Activated naive CD4-positive, alpha-beta T cell treated with anti-CD3 and anti-CD28 coated beads for 36 hours (primary cell): ENCODE measurements at regions of chr19 and their contacts with region 1.

Region 1: GRCh38 chr19:7680606-7681339 is at the start of gene TRAPPC5:
- DNase-seq: peak; percentile 86
- H3K4me3 Mint-ChIP-seq: peak within 1 kb of the TSS; percentile 92
- H3K27ac Mint-ChIP-seq: peak within 1 kb of the TSS; percentile 88
- H3K4me1 Mint-ChIP-seq: peaks cover 48% of the 10 kb centered on the region
- H3K27me3 Mint-ChIP-seq: peaks cover 15% of the 10 kb centered on the region
- total RNA-seq, gene TRAPPC5: 74.7 to 82.4 TPM

Region 2: DNA sequence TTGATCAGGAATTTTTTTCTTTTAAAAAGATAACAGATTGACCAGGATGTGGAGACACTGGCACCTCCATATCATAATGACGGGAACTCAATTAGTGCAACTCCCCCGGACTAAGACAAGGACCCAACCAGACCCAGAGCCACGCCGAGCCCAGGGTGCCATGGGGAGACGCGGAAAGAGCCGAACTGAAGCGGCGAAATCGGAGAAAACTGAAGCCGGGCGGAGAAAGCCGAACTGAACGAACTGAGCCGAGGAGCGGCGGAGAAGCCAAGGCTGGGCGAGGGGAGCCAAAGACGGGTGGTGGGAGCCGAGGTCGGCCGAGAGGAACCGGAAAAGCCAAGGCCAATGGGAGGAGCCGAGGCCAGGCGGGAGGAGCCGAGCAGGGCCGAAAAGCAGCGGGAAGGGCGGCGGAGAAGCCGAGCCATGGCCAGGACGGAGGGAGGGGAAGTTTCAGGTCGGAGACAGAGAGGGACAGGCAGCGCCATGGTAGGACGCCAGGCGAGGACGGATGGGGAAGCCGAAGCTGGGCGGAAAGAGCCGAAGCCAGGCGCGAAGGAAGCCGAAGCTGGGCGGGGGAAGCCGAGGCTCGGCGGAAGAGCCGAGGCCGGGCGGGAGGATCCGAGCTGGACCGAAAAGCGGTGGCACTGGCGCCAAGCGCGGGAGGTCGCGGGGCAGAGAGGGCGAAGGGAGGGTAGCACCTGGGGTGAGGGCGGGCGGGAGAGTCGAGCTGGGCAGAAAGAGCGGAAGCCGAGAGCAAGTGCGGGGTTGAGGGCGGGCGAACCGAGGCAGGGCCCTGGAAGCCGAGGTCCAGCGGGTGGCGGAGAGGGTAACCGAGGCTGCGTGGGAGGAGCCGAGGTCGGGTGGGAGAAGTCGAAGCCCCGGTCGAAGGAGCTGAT is 581.8 kb before region 1 on chr19:
- CTCF ChIA-PET with region 1: no interaction called
- intact Hi-C with region 1: loop called (anchors 2 kb)
- DNase-seq: peak; percentile 88
- H3K4me3 Mint-ChIP-seq: peak overlapping the region; percentile 94
- H3K27ac Mint-ChIP-seq: peak overlapping the region; percentile 90
- H3K4me1 Mint-ChIP-seq: peaks cover 16% of the 10 kb centered on the region
- H3K27me3 Mint-ChIP-seq: no peaks in the 10 kb centered on the region

Region 3: GRCh38 chr19:7629347-7630054 is 51.3 kb before region 1 on chr19 and contains the starts of genes PET100 and XAB2:
- CTCF ChIA-PET with region 1: interaction called, 11 read pairs
- intact Hi-C with region 1: loop called (anchors 1 kb)
- DNase-seq: peak; percentile 97
- H3K4me3 Mint-ChIP-seq: peak within 1 kb of the TSS; percentile 98
- H3K27ac Mint-ChIP-seq: peak within 1 kb of the TSS; percentile 97
- H3K4me1 Mint-ChIP-seq: peaks cover 42% of the 10 kb centered on the region
- H3K27me3 Mint-ChIP-seq: no peaks in the 10 kb centered on the region
- total RNA-seq, gene PET100: 93.9 to 96.5 TPM
- total RNA-seq, gene XAB2: 60.0 to 60.4 TPM

Region 4: GRCh38 chr19:7658219-7658686 is 22.5 kb before region 1 on chr19:
- CTCF ChIA-PET with region 1: interaction called, 46 read pairs
- intact Hi-C with region 1: loop called (anchors 1 kb)
- DNase-seq: peak; percentile 81
- H3K4me3 Mint-ChIP-seq: peak overlapping the region; percentile 75
- H3K27ac Mint-ChIP-seq: peak overlapping the region; percentile 78
- H3K4me1 Mint-ChIP-seq: peaks cover 23% of the 10 kb centered on the region
- H3K27me3 Mint-ChIP-seq: no peaks in the 10 kb centered on the region

Region 5: GRCh38 chr19:7772752-7773291 is 92.0 kb after region 1 on chr19:
- CTCF ChIA-PET with region 1: interaction called, 6 read pairs
- intact Hi-C with region 1: loop called (anchors 1 kb)
- DNase-seq: peak; percentile 71
- H3K4me3 Mint-ChIP-seq: no peak overlapping the region
- H3K27ac Mint-ChIP-seq: peak overlapping the region; percentile 77
- H3K4me1 Mint-ChIP-seq: peaks cover 27% of the 10 kb centered on the region
- H3K27me3 Mint-ChIP-seq: peaks cover 4% of the 10 kb centered on the region

Region 6: GRCh38 chr19:7806876-7807275 is 126.1 kb after region 1 on chr19:
- CTCF ChIA-PET with region 1: interaction called, 52 read pairs
- intact Hi-C with region 1: no loop called
- DNase-seq: no peak
- H3K4me3 Mint-ChIP-seq: no peak overlapping the region
- H3K27ac Mint-ChIP-seq: no peak overlapping the region
- H3K4me1 Mint-ChIP-seq: peaks cover 12% of the 10 kb centered on the region
- H3K27me3 Mint-ChIP-seq: peaks cover 24% of the 10 kb centered on the region